H1 (cell line): ENCODE measurements at regions of chr9 and their contacts with region 1.

Region 1: GRCh38 chr9:92501671-92502393 is 19.5 kb upstream of the ASPN start:
- DNase-seq: no peak
- H3K4me3 ChIP-seq: no peak overlapping the region
- H3K27ac ChIP-seq: no peak overlapping the region
- H3K4me1 ChIP-seq: peaks cover 0 to 3% (median 2%) of the 10 kb centered on the region in 4 experiments; a peak in 4 of 7 replicates
- H3K27me3 ChIP-seq: no peaks in the 10 kb centered on the region
- CTCF ChIP-seq: peak; percentile 56 to 86 (median 67)
- EP300 ChIP-seq: no peak
- POLR2A ChIP-seq: no peak
- RAD21 ChIP-seq: peak; percentile 46 to 59

Region 2: DNA sequence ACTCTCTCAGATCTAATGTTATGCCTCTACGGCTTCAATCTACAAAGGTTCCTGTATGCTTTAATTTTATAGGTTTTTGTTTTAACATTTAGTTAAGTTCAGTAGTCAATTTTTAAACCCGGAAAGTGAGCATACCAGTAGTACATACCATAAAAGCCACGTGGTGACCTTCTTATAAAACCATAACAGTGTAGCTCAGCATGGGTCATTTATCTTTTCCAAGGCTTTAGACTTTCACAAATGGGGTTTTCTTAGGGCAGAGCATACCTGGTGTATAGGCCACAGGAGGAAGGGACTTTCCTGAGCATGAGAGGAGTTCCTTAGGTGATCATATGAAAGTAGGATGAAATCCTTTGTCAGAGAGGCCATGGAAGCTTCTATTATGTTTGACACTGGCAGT is 10.8 kb after region 1 on chr9:
- CTCF ChIA-PET with region 1: interaction called, 11 read pairs
- POLR2A ChIA-PET with region 1: no interaction called
- DNase-seq: no peak
- H3K4me3 ChIP-seq: no peak overlapping the region
- H3K27ac ChIP-seq: no peak overlapping the region
- H3K4me1 ChIP-seq: peaks cover 0 to 2% (median 0%) of the 10 kb centered on the region in 4 experiments; a peak in 2 of 7 replicates
- H3K27me3 ChIP-seq: no peaks in the 10 kb centered on the region
- CTCF ChIP-seq: no peak
- EP300 ChIP-seq: no peak
- POLR2A ChIP-seq: no peak
- RAD21 ChIP-seq: no peak

Region 3: DNA sequence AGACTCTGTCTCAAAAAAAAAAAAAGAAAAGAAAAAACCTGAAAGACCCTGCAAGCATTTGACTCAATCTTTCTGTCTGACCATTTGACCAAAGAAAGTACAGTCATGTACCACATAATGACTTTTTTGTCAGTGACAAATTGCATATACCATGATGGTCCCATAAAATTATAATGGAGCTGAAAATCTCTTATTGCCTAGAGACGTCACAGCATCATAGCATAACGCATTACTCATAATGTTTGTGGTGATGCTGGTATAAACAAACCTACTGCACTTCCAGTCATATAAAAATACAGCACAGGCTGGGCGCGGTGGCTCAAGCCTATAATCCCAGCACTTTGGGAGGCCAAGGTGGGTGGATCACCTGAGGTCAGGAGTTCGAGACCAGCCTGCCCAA is 23.5 kb after region 1 on chr9:
- CTCF ChIA-PET with region 1: interaction called, 19 read pairs
- POLR2A ChIA-PET with region 1: no interaction called
- DNase-seq: no peak
- H3K4me3 ChIP-seq: no peak overlapping the region
- H3K27ac ChIP-seq: no peak overlapping the region
- H3K4me1 ChIP-seq: no peaks in the 10 kb centered on the region
- H3K27me3 ChIP-seq: no peaks in the 10 kb centered on the region
- CTCF ChIP-seq: no peak
- EP300 ChIP-seq: no peak
- POLR2A ChIP-seq: no peak
- RAD21 ChIP-seq: no peak

Region 4: GRCh38 chr9:92558612-92559374 is 57.0 kb after region 1 on chr9:
- CTCF ChIA-PET with region 1: interaction called, 13 read pairs
- POLR2A ChIA-PET with region 1: no interaction called
- DNase-seq: no peak
- H3K4me3 ChIP-seq: no peak overlapping the region
- H3K27ac ChIP-seq: no peak overlapping the region
- H3K4me1 ChIP-seq: peaks cover 0 to 3% (median 0%) of the 10 kb centered on the region in 4 experiments; a peak in 4 of 7 replicates
- H3K27me3 ChIP-seq: no peaks in the 10 kb centered on the region
- CTCF ChIP-seq: no peak
- EP300 ChIP-seq: no peak
- POLR2A ChIP-seq: no peak
- RAD21 ChIP-seq: no peak

Region 5: DNA sequence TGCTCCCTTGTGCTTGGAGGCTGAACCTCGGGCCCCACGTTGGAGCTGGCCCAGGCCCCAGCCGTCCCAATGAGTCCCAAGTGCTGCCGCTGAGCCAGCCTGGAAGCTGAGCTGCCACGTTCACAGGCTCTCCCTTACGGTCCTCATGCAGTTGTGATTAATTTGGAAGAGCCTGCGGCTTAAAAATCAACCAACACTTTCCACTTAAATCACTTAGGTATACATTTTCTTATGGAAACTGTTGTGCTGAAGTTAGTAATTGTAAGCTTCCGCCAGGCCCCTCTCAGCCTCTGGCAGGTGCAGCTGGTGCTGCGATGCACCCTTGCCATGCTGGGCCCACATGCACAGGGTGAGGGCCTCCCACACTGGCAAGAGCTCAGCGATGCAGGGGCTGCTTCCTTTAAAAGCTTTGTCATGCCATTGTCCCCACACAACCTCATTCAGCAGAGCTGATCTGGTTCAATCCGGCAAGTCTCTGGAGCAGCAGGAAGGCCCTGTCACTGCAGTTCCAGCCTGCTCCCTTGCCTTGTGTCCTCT is 107.1 kb after region 1 on chr9:
- CTCF ChIA-PET with region 1: interaction called, 10 read pairs
- POLR2A ChIA-PET with region 1: no interaction called
- DNase-seq: no peak
- H3K4me3 ChIP-seq: no peak overlapping the region
- H3K27ac ChIP-seq: no peak overlapping the region
- H3K4me1 ChIP-seq: no peaks in the 10 kb centered on the region
- H3K27me3 ChIP-seq: no peaks in the 10 kb centered on the region
- CTCF ChIP-seq: no peak
- EP300 ChIP-seq: no peak
- POLR2A ChIP-seq: no peak
- RAD21 ChIP-seq: no peak

Region 6: GRCh38 chr9:92634712-92635605 is 133.1 kb after region 1 on chr9:
- CTCF ChIA-PET with region 1: interaction called, 19 read pairs
- POLR2A ChIA-PET with region 1: no interaction called
- DNase-seq: peak; percentile 84 to 96
- H3K4me3 ChIP-seq: no peak overlapping the region
- H3K27ac ChIP-seq: 0 out of 2 replicates have a peak overlapping the region, but pooled peaks have one; percentile 16
- H3K4me1 ChIP-seq: no peaks in the 10 kb centered on the region
- H3K27me3 ChIP-seq: no peaks in the 10 kb centered on the region
- CTCF ChIP-seq: peak; percentile 100
- EP300 ChIP-seq: no peak
- POLR2A ChIP-seq: no peak
- RAD21 ChIP-seq: peak; percentile 98 to 99

Region 7: GRCh38 chr9:92895812-92896436 is 394.1 kb after region 1 on chr9:
- CTCF ChIA-PET with region 1: no interaction called
- POLR2A ChIA-PET with region 1: no interaction called
- DNase-seq: peak in 1 of 2 experiments; percentile 30
- H3K4me3 ChIP-seq: no peak overlapping the region
- H3K27ac ChIP-seq: no peak overlapping the region
- H3K4me1 ChIP-seq: peaks cover 0 to 2% (median under 1%) of the 10 kb centered on the region in 4 experiments; a peak in 3 of 7 replicates
- H3K27me3 ChIP-seq: no peaks in the 10 kb centered on the region
- CTCF ChIP-seq: no peak
- EP300 ChIP-seq: no peak
- POLR2A ChIP-seq: no peak
- RAD21 ChIP-seq: no peak